B cell (primary cell): ENCODE measurements at regions of chr2 and their contacts with region 1.

Region 1: GRCh38 chr2:177332041-177332991 is 60.3 kb upstream of the AGPS start:
- DNase-seq: peak; percentile 82
- ATAC-seq: peak; percentile 85
- H3K4me3 ChIP-seq: no peak overlapping the region
- H3K4me3 Mint-ChIP-seq: no peak overlapping the region
- H3K27ac ChIP-seq: no peak overlapping the region
- H3K27ac Mint-ChIP-seq: no peak overlapping the region
- H3K4me1 ChIP-seq: peaks cover 4 to 5% of the 10 kb centered on the region in 2 donors
- H3K4me1 Mint-ChIP-seq: peaks cover 8% of the 10 kb centered on the region
- H3K27me3 ChIP-seq: no peaks in the 10 kb centered on the region
- H3K27me3 Mint-ChIP-seq: no peaks in the 10 kb centered on the region
- CTCF ChIP-seq: peak; percentile 77

Region 2: GRCh38 chr2:177187631-177188312 is 144.5 kb before region 1 on chr2:
- CTCF ChIA-PET with region 1: no interaction called
- POLR2A ChIA-PET with region 1: no interaction called
- intact Hi-C with region 1: no loop called
- DNase-seq: no peak
- ATAC-seq: no peak
- H3K4me3 ChIP-seq: no peak overlapping the region
- H3K4me3 Mint-ChIP-seq: no peak overlapping the region
- H3K27ac ChIP-seq: no peak overlapping the region
- H3K27ac Mint-ChIP-seq: no peak overlapping the region
- H3K4me1 ChIP-seq: no peaks in the 10 kb centered on the region
- H3K4me1 Mint-ChIP-seq: no peaks in the 10 kb centered on the region
- H3K27me3 ChIP-seq: no peaks in the 10 kb centered on the region
- H3K27me3 Mint-ChIP-seq: no peaks in the 10 kb centered on the region
- CTCF ChIP-seq: no peak

Region 3: DNA sequence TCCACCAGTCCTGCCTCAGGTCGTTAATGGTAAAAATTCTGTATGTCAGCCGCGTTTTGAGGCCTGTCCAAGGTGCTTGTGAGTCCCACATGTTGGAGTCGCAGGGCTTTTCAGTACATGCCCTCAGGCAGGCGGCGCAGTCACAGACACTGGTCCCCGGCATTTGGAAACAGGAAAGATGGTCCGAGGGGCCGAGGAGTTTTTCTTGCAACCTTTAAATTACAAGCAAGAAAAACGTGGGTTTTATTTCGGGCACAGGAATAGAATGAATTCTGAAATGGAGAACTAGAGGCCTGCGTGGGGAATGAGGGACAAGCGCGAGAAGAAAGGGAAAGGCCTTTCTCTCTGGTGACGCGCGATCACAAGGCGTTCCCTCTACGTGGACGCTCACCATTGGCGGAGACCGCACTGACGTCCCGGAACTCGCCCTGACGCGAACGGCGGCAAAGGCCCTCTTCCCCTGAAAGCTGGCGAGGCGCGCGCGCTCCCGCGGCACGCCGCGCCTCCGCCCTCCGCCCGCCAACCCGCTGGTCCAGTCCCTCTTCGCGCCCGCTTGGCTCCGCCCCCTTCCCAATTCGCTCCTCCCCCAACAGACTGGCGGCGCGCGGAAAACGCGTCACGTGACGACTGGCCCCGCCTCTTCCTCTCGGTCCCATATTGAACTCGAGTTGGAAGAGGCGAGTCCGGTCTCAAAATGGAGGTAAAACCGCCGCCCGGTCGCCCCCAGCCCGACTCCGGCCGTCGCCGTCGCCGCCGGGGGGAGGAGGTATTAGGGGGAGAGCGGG is 120.0 kb before region 1 on chr2 and contains the start of gene HNRNPA3:
- CTCF ChIA-PET with region 1: no interaction called
- POLR2A ChIA-PET with region 1: no interaction called
- intact Hi-C with region 1: loop called (anchors 5 kb)
- DNase-seq: peak; percentile 100
- ATAC-seq: peak; percentile 86
- H3K4me3 ChIP-seq: peak within 1 kb of the TSS; percentile 81 to 97 (median 94)
- H3K4me3 Mint-ChIP-seq: peak within 1 kb of the TSS; percentile 91
- H3K27ac ChIP-seq: peak within 1 kb of the TSS; percentile 99 to 100
- H3K27ac Mint-ChIP-seq: peak within 1 kb of the TSS; percentile 98
- H3K4me1 ChIP-seq: peaks cover 32 to 37% of the 10 kb centered on the region in 2 donors
- H3K4me1 Mint-ChIP-seq: peaks cover 47% of the 10 kb centered on the region
- H3K27me3 ChIP-seq: no peaks in the 10 kb centered on the region
- H3K27me3 Mint-ChIP-seq: no peaks in the 10 kb centered on the region
- CTCF ChIP-seq: no peak
- total RNA-seq, gene HNRNPA3: 197 and 200 TPM in 2 replicates

Region 4: DNA sequence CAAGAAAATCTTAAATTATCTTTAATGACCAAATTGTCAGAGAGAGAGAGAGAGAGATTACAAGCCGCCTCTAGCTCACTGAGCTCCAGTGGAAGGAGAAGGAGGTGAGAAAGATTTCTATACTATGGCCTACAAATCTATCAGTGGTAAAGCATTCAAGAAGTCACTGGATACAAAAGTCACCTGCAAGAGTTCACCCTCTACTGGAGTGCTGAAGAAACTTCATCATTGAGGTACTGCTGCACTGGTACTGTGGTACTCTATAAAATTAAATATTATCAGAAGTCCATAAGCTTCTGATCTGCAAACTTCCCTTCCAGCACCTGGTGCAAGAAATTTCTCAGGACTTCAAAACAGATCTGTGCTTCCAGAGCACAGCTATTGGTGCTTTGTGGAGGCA is 12.0 kb after region 1 on chr2:
- CTCF ChIA-PET with region 1: interaction called, 25 read pairs
- POLR2A ChIA-PET with region 1: no interaction called
- intact Hi-C with region 1: no loop called
- DNase-seq: no peak
- ATAC-seq: no peak
- H3K4me3 ChIP-seq: no peak overlapping the region
- H3K4me3 Mint-ChIP-seq: no peak overlapping the region
- H3K27ac ChIP-seq: no peak overlapping the region
- H3K27ac Mint-ChIP-seq: no peak overlapping the region
- H3K4me1 ChIP-seq: peaks cover 4% of the 10 kb centered on the region in 2 donors
- H3K4me1 Mint-ChIP-seq: peaks cover 8% of the 10 kb centered on the region
- H3K27me3 ChIP-seq: no peaks in the 10 kb centered on the region
- H3K27me3 Mint-ChIP-seq: no peaks in the 10 kb centered on the region
- CTCF ChIP-seq: no peak

Region 5: GRCh38 chr2:177392373-177393202 is 60.3 kb after region 1 on chr2 and contains the start of gene AGPS:
- CTCF ChIA-PET with region 1: interaction called, 14 read pairs
- POLR2A ChIA-PET with region 1: no interaction called
- intact Hi-C with region 1: no loop called
- DNase-seq: peak; percentile 66
- ATAC-seq: peak; percentile 91
- H3K4me3 ChIP-seq: peak within 1 kb of the TSS; percentile 70 to 83 (median 77)
- H3K4me3 Mint-ChIP-seq: peak within 1 kb of the TSS; percentile 91
- H3K27ac ChIP-seq: peak within 1 kb of the TSS in 1 of 2 donors; percentile 47
- H3K27ac Mint-ChIP-seq: peak within 1 kb of the TSS; percentile 87
- H3K4me1 ChIP-seq: peaks cover 19 to 28% of the 10 kb centered on the region in 2 donors
- H3K4me1 Mint-ChIP-seq: peaks cover 42% of the 10 kb centered on the region
- H3K27me3 ChIP-seq: no peaks in the 10 kb centered on the region
- H3K27me3 Mint-ChIP-seq: no peaks in the 10 kb centered on the region
- CTCF ChIP-seq: no peak
- total RNA-seq, gene AGPS: 23.2 and 25.5 TPM in 2 replicates

Region 6: GRCh38 chr2:177445200-177445599 is 112.9 kb after region 1 on chr2:
- CTCF ChIA-PET with region 1: no interaction called
- POLR2A ChIA-PET with region 1: no interaction called
- intact Hi-C with region 1: no loop called
- DNase-seq: no peak
- ATAC-seq: no peak
- H3K4me3 ChIP-seq: no peak overlapping the region
- H3K4me3 Mint-ChIP-seq: no peak overlapping the region
- H3K27ac ChIP-seq: no peak overlapping the region
- H3K27ac Mint-ChIP-seq: no peak overlapping the region
- H3K4me1 ChIP-seq: no peaks in the 10 kb centered on the region
- H3K4me1 Mint-ChIP-seq: no peaks in the 10 kb centered on the region
- H3K27me3 ChIP-seq: no peaks in the 10 kb centered on the region
- H3K27me3 Mint-ChIP-seq: no peaks in the 10 kb centered on the region
- CTCF ChIP-seq: no peak

Region 7: GRCh38 chr2:177489719-177490301 is 157.5 kb after region 1 on chr2:
- CTCF ChIA-PET with region 1: no interaction called
- POLR2A ChIA-PET with region 1: no interaction called
- intact Hi-C with region 1: loop called (anchors 10 kb)
- DNase-seq: peak; percentile 4
- ATAC-seq: no peak
- H3K4me3 ChIP-seq: no peak overlapping the region
- H3K4me3 Mint-ChIP-seq: no peak overlapping the region
- H3K27ac ChIP-seq: no peak overlapping the region
- H3K27ac Mint-ChIP-seq: no peak overlapping the region
- H3K4me1 ChIP-seq: no peaks in the 10 kb centered on the region
- H3K4me1 Mint-ChIP-seq: no peaks in the 10 kb centered on the region
- H3K27me3 ChIP-seq: no peaks in the 10 kb centered on the region
- H3K27me3 Mint-ChIP-seq: no peaks in the 10 kb centered on the region
- CTCF ChIP-seq: peak; percentile 53

Region 8: DNA sequence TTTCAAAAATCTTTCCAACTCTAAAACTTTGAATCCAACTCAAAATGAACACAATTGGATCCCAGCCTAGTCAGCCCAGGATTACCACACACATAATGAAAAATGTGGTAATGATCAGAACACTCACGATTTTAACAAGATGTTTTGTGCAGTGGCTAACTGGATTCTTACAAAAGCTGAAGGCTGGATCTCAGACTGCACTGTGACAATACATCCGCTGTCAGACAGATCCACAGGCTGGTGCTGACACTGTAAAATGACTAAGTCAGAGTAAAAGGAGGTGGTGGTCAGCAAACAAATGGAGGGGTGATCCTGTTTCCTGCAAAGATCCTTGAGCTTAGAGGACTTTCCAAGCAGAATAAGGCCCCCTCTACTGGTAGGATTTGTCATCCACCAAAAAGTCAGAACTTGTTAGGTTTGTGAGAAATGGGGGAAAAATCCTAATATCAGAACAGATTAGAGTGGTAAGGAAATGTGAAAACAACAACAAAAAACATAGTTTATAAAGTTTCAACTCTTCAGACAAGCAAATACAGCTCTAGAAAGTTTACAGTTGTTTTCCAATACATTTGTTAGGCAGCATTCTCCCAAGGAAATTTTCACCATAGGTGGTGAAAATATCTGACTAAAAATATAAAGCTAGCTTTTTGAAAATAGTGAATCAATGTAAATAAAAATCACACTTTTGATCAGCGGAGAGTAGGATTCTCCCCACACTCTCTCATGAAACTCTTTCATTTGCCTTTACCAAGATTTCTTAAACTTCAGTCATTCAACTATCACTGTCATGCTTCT is 272.2 kb after region 1 on chr2:
- CTCF ChIA-PET with region 1: interaction called, 10 read pairs
- POLR2A ChIA-PET with region 1: no interaction called
- intact Hi-C with region 1: no loop called
- DNase-seq: peak; percentile 34
- ATAC-seq: no peak
- H3K4me3 ChIP-seq: no peak overlapping the region
- H3K4me3 Mint-ChIP-seq: no peak overlapping the region
- H3K27ac ChIP-seq: no peak overlapping the region
- H3K27ac Mint-ChIP-seq: no peak overlapping the region
- H3K4me1 ChIP-seq: no peaks in the 10 kb centered on the region
- H3K4me1 Mint-ChIP-seq: no peaks in the 10 kb centered on the region
- H3K27me3 ChIP-seq: no peaks in the 10 kb centered on the region
- H3K27me3 Mint-ChIP-seq: peaks cover 7% of the 10 kb centered on the region
- CTCF ChIP-seq: peak; percentile 71

Region 9: DNA sequence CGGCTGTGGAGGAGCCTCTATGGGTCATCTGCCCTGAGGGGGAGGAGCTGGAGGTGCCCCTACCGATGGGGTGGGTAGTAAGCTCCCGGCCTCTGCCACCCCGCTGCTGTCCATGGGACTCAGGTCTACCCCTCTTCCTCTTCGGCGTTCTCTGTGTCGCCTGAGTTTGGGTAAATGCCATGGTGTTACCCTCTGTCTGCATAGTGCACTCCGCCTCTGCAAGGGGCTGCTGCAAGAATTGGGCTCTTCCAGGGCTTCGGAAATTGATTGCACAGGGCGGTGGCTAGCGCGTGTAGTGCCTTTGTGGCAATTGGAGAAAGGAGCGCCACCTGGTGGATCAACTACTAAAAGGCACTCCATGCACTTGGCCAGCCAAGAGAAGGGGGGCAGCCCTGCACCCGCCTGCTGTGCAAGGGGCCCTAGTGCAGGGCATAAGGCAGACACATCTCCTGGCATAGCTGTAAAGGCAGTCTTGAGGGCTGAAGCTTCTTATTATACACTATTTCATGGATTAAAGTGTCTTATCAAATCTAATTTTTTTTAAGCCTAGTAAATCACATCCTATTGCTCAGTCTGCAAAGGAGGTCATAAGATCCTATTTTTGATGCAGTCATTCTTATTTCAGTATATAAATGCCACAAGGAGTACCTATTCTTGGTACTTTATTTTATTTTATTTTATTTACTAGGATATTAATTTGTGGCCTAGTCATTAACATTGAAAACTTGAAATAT is 431.4 kb after region 1 on chr2:
- CTCF ChIA-PET with region 1: interaction called, 66 read pairs
- POLR2A ChIA-PET with region 1: no interaction called
- intact Hi-C with region 1: loop called (anchors 1 kb)
- DNase-seq: peak; percentile 80
- ATAC-seq: peak; percentile 97
- H3K4me3 ChIP-seq: peak overlapping the region in 1 of 5 experiments; percentile 19
- H3K4me3 Mint-ChIP-seq: peak overlapping the region; percentile 75
- H3K27ac ChIP-seq: no peak overlapping the region
- H3K27ac Mint-ChIP-seq: no peak overlapping the region
- H3K4me1 ChIP-seq: peaks cover 4 to 5% of the 10 kb centered on the region in 2 donors
- H3K4me1 Mint-ChIP-seq: peaks cover 9% of the 10 kb centered on the region
- H3K27me3 ChIP-seq: peaks cover 0 to 6% (median 0%) of the 10 kb centered on the region in 4 experiments
- H3K27me3 Mint-ChIP-seq: peaks cover 23% of the 10 kb centered on the region
- CTCF ChIP-seq: peak; percentile 93

Region 10: GRCh38 chr2:177842243-177842642 is 509.9 kb after region 1 on chr2:
- CTCF ChIA-PET with region 1: no interaction called
- POLR2A ChIA-PET with region 1: no interaction called
- intact Hi-C with region 1: no loop called
- DNase-seq: no peak
- ATAC-seq: no peak
- H3K4me3 ChIP-seq: no peak overlapping the region
- H3K4me3 Mint-ChIP-seq: no peak overlapping the region
- H3K27ac ChIP-seq: no peak overlapping the region
- H3K27ac Mint-ChIP-seq: no peak overlapping the region
- H3K4me1 ChIP-seq: no peaks in the 10 kb centered on the region
- H3K4me1 Mint-ChIP-seq: no peaks in the 10 kb centered on the region
- H3K27me3 ChIP-seq: no peaks in the 10 kb centered on the region
- H3K27me3 Mint-ChIP-seq: peaks cover 4% of the 10 kb centered on the region
- CTCF ChIP-seq: no peak